Activated CD4-positive, alpha-beta memory T cell treated with anti-CD3 and anti-CD28 coated beads, Interleukin-2, amount 10 ng/mL, durations not matched to agents 7 days and 5 days (primary cell): ENCODE measurements at regions of chr13 and their contacts with region 1.

Region 1: DNA sequence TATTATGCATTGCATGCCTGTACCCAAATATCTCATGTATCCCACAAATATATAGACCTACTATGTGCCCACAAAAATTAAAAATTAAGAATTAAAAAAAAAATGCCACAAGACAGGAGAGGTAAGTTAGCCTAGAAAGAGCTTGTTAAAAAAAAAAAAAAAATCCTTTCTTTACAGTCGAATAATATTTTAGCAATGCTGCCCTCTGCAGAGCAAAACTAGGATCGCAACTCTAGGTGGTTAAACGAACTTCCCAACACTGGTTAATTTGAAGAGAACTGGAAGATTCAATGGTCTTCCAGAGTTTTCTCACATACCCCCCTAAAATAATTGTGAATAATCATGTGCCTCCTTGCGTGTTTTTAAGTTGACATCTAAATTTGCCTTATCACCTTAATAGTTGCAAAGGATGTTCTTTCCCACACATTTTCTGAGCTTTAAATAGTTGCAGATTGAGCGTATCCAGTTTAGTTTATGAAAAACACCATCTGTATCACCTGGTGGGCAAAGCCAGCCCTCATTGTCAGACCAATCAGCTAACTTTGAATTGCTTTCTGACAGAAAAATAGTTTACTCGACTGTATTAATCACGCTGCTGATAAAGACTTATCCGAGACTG is 47.4 kb upstream of the RCBTB2 start:
- DNase-seq: peak; percentile 72
- H3K4me3 Mint-ChIP-seq: no peak overlapping the region
- H3K27ac Mint-ChIP-seq: no peak overlapping the region
- H3K4me1 Mint-ChIP-seq: peaks cover 38% of the 10 kb centered on the region
- H3K27me3 Mint-ChIP-seq: peaks cover 39% of the 10 kb centered on the region

Region 2: GRCh38 chr13:48334534-48335127 is 245.7 kb before region 1 on chr13:
- CTCF ChIA-PET with region 1: interaction called, 119 read pairs
- POLR2A ChIA-PET with region 1: interaction called, 7 read pairs
- DNase-seq: no peak
- H3K4me3 Mint-ChIP-seq: no peak overlapping the region
- H3K27ac Mint-ChIP-seq: no peak overlapping the region
- H3K4me1 Mint-ChIP-seq: peaks cover 18% of the 10 kb centered on the region
- H3K27me3 Mint-ChIP-seq: no peaks in the 10 kb centered on the region

Region 3: DNA sequence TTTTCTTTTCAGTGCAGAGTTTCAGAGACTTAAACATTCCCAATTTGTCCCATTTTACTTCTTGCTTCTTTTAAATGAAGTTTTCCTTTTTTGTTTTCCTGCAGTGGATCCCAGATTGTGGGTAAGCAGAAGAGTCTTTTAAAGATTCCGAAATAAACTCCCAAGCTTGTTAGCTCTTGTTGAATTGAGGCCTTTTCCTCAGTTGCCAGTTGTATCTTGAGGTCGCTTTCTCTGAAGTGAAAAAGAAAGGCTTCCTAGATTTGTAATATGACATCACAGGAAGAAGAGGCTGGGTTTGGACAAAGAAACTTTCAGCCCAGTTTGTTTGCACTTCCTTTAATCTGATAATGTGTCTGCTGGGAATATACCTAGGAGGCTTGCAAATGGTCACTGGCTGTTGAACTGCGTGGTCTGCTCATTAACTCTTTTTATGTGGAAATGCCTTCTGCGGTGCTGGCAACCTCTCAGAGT is 167.4 kb before region 1 on chr13 and contains the start of gene LPAR6:
- CTCF ChIA-PET with region 1: interaction called, 10 read pairs
- POLR2A ChIA-PET with region 1: interaction called, 5 read pairs
- DNase-seq: peak; percentile 26
- H3K4me3 Mint-ChIP-seq: peak within 1 kb of the TSS; percentile 99
- H3K27ac Mint-ChIP-seq: peak within 1 kb of the TSS; percentile 96
- H3K4me1 Mint-ChIP-seq: peaks cover 42% of the 10 kb centered on the region
- H3K27me3 Mint-ChIP-seq: no peaks in the 10 kb centered on the region
- total RNA-seq, gene LPAR6: 96.8 to 100 TPM

Region 4: DNA sequence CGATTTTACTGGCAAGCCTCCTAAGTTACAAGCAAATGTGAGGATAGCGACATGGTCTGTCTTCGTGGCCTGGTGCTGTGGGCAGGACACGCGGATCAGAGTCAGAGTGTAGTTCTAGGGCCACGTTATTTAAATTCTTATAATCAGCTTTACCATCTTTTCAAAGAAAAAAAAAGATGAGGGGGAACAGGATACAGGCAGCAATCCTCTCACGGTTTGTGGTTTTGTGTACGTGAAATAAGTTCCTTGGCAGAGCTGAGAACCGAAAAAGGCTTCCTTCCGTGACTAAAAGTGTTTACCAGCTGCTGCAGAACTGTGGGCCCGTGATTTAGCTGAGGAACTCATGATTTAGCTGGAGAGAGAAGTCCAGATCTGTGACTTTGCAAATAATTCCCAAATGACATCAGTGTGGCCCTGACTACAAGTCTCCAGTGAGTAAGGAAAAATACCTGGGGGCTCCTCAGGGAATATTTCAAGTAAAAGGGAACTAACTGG is 74.7 kb before region 1 on chr13:
- CTCF ChIA-PET with region 1: interaction called, 20 read pairs
- POLR2A ChIA-PET with region 1: interaction called, 19 read pairs
- DNase-seq: peak; percentile 74
- H3K4me3 Mint-ChIP-seq: peak overlapping the region; percentile 50
- H3K27ac Mint-ChIP-seq: peak overlapping the region; percentile 98
- H3K4me1 Mint-ChIP-seq: peaks cover 82% of the 10 kb centered on the region
- H3K27me3 Mint-ChIP-seq: no peaks in the 10 kb centered on the region

Region 5: DNA sequence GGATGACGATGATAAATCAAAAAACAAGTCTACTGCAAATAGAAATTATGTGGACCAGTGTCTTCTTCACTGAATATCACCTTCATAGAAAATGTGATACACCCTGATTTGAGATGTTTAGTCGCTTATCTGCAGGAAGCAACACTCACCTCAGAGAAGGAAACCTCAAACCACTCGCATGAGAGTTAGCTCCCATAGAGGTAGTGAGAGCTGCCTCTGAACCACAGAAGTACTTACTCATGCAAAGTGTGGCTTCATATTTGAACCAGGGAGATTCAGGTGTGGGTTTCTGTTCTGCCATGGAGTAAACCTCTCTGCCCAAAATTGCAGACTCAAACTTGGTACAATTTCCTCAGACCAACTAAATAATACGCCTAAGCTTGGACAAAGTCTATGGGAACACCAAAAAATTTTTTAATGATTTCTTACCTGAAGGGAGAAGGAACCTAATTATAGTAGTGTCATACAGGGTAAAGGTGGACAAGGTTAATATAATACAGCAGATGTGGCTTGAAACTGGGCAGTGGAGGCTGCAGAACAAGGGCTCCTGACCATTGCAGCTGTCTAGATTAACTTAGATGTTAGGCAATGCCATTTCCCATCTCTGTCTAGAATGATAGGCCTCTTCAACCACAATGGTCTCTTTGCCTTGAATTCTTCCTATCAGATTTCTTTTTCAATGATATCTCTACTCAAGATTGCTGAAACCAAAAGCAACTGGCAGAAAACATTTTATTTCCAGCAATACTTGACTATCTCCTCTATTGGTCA is 17.8 kb before region 1 on chr13:
- CTCF ChIA-PET with region 1: interaction called, 47 read pairs
- POLR2A ChIA-PET with region 1: interaction called, 18 read pairs
- DNase-seq: peak; percentile 86
- H3K4me3 Mint-ChIP-seq: peak overlapping the region; percentile 47
- H3K27ac Mint-ChIP-seq: peak overlapping the region; percentile 78
- H3K4me1 Mint-ChIP-seq: peaks cover 61% of the 10 kb centered on the region
- H3K27me3 Mint-ChIP-seq: peaks cover 46% of the 10 kb centered on the region